Activated CD4-positive, alpha-beta memory T cell treated with anti-CD3 and anti-CD28 coated beads, Interleukin-2, amount 10 ng/mL, durations not matched to agents 7 days and 5 days (primary cell): ENCODE measurements at regions of chr19 and their contacts with region 1.

Region 1: DNA sequence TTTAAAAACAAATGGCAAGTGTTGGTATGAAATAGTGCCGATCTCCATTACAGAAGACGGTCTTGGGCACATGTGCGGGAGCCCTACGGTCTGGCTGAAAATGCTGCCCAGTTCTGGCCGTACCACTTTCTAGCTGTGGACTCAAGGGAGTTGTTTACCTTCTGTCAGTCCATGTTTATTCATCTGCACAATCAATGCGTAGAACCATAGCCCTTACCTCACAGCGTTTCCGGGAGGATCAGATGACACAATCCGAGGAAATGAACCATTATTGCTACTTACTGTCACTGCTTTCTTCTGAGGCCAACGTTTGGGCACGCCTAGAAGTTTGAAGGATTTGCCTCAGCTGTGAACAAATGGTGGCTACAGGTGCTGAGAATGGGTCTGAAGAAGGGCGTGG is 31.2 kb downstream of the GADD45B start:
- DNase-seq: peak; percentile 70
- H3K4me3 Mint-ChIP-seq: peak overlapping the region; percentile 41
- H3K27ac Mint-ChIP-seq: peak overlapping the region; percentile 86
- H3K4me1 Mint-ChIP-seq: peaks cover 37% of the 10 kb centered on the region
- H3K27me3 Mint-ChIP-seq: no peaks in the 10 kb centered on the region

Region 2: GRCh38 chr19:2355168-2356035 is 151.7 kb before region 1 on chr19:
- CTCF ChIA-PET with region 1: no interaction called
- POLR2A ChIA-PET with region 1: no interaction called
- DNase-seq: no peak
- H3K4me3 Mint-ChIP-seq: no peak overlapping the region
- H3K27ac Mint-ChIP-seq: no peak overlapping the region
- H3K4me1 Mint-ChIP-seq: peaks cover under 1% of the 10 kb centered on the region
- H3K27me3 Mint-ChIP-seq: peaks cover 4% of the 10 kb centered on the region

Region 3: DNA sequence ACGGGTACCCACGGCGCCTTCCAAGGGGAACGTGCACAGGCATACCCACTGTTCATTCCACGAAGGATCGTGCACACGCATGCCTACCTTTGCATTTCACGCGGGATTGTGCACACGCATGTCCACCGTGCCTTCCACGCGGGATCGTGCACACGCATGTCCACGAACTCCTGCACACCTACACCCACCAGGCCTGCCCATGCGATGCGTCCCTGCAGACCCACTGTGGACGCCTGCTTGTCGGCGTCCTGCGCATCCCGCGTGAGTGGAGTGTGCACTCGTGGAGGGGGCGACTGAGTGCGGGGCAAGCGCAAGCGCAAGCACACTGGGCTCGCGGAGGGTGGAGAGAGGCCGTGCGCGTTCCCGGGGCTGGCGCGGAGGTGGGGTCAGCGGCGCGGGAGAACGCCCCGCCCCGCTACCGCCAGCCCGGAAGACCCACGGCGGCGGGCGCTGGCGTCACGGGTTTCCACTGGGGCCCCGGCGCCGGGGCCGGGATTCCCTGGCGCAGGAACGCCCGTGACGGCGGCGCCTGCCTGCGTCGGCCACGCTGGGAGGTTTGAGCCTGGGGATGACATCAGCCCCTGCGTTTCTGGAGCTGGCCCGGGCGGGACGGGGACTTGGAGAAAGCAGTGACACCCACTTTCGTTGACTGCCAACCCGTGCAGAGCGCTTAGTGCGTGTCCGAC is 12.5 kb before region 1 on chr19:
- CTCF ChIA-PET with region 1: interaction called, 3 read pairs
- POLR2A ChIA-PET with region 1: interaction called, 23 read pairs
- DNase-seq: peak; percentile 69
- H3K4me3 Mint-ChIP-seq: peak overlapping the region; percentile 73
- H3K27ac Mint-ChIP-seq: peak overlapping the region; percentile 65
- H3K4me1 Mint-ChIP-seq: peaks cover 45% of the 10 kb centered on the region
- H3K27me3 Mint-ChIP-seq: peaks cover 38% of the 10 kb centered on the region

Region 4: DNA sequence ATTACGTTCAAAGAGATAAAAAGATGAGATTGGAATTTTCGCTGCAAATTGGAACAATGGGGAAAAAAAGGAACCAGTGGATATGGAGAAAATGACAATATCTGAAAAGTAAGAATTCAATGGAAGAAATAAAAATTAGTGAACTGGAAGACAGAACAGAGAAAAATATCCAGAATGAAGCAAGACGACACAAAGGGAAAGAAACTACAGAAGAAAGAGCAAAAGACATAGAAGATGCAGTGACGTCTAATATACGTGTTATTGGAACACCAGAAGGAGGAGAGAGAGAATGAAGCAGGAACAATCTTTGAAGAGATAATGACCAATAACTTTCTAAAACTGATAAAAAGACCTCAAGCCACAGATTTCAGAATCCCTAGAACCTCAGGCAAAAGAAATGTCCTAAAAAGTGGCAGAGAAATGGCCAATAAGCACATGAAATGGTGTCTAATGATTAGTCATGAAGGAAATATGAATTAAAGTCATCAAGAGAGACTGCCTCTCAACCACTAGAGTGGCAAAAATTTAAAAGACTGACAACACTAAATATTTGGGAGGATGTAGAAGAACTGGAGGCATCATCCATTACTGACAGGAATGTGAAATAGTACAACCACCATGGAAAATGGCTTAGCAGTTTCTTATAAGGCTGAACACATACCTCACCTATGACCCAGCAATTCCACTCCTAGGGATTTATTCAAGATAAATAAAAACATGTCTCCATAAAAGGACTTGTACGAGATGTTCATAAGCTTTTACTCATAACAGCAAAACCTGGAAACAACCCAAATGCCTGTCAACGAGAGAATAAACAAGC is 25.4 kb after region 1 on chr19:
- CTCF ChIA-PET with region 1: no interaction called
- POLR2A ChIA-PET with region 1: no interaction called
- DNase-seq: no peak
- H3K4me3 Mint-ChIP-seq: no peak overlapping the region
- H3K27ac Mint-ChIP-seq: no peak overlapping the region
- H3K4me1 Mint-ChIP-seq: peaks cover 27% of the 10 kb centered on the region
- H3K27me3 Mint-ChIP-seq: peaks cover 7% of the 10 kb centered on the region

Region 5: GRCh38 chr19:2552859-2553258 is 45.8 kb after region 1 on chr19:
- CTCF ChIA-PET with region 1: interaction called, 4 read pairs
- POLR2A ChIA-PET with region 1: interaction called, 13 read pairs
- DNase-seq: peak; percentile 76
- H3K4me3 Mint-ChIP-seq: peak overlapping the region; percentile 61
- H3K27ac Mint-ChIP-seq: peak overlapping the region; percentile 93
- H3K4me1 Mint-ChIP-seq: peaks cover 39% of the 10 kb centered on the region
- H3K27me3 Mint-ChIP-seq: peaks cover 3% of the 10 kb centered on the region

Region 6: DNA sequence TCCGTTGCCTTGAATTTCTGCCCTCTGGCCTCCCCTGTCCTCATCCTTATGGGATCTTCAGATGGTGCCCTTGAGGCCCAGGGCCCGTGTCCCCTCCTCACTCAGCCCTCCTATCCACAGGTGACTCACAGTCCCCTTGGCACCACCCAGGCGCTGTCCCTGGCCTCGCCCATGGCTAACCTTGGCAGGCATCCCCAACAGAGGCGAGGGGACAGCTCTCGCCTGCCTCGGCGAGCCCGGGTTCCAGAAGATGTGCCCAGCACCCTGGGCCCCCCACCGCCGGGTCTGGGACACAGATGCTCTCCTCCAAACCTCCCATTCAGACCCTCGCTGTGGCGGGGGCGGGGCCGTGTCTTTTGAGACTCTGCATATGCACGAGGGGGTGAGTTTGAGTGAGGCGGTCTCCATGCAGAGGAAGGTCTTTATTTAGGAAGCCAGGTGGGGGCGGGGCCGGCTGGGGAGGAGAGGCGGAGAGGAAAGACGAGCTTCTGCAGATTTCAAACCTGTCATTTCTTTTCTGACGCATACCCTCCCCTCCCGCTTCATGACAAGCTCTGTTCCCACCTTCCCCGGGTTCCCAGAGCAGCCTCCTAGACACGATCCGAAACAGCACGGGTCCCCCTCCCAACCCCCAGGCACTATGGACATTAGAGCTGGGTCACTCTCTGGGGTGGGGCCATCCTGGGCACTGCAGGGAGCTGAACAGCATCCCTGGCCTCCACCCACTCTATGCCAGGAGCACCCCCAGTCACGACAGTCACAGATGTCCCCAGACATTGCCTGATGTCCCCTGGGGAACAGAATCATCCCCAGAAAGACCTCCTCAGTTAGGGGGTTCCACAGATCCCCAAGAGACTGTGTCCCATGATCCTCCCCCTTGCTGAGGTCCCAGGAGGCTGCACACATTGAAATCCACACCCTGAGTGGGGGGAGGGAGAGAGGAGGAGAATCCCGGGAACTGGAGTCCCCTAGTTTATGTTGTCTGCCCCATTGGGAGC is 146.9 kb after region 1 on chr19:
- CTCF ChIA-PET with region 1: no interaction called
- POLR2A ChIA-PET with region 1: no interaction called
- DNase-seq: no peak
- H3K4me3 Mint-ChIP-seq: no peak overlapping the region
- H3K27ac Mint-ChIP-seq: no peak overlapping the region
- H3K4me1 Mint-ChIP-seq: no peaks in the 10 kb centered on the region
- H3K27me3 Mint-ChIP-seq: no peaks in the 10 kb centered on the region